CD8-positive, alpha-beta memory T cell (primary cell): ENCODE measurements at regions of chr17 and their contacts with region 1.

Region 1: DNA sequence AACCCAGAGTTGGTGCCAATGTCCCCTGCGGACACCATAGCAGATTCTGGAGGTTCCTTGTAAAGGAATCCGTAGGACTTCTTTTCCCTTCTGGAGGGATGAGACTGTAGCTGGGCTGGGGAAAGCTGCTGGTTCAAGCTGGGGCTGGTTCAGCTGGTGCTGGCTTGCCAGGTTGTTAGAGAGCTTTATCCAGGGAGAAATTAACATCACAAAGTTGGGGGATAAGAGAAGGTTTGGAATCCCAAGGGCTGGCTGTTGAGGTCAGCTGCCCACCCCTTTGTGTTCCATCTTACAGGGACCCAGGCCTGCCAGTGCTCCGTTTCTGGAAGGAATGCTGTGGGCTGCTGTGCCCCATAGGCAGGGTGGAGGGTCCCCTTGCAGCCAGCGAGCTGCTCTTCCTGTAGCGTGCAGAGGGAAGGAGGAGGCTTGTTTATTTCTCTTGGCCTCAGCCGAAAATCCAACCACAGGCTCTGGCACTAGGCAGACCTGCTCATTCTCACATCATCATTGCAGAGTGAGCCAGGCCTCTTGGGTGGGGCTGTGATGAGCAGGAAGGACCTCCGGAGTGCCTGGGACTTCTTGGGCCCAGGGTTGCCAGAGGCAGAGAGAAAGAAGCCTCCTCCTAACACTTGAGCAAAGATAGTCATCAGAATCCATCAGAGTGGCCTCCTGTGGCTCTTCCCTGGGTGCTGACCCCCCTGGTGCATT is 251.1 kb downstream of the SEC14L1 start:
- DNase-seq: peak in 2 of 5 donors; percentile 26 to 63
- H3K4me3 ChIP-seq: no peak overlapping the region
- H3K4me3 Mint-ChIP-seq: peak overlapping the region; percentile 20 to 76 (median 62)
- H3K27ac ChIP-seq: peak overlapping the region; percentile 3
- H3K27ac Mint-ChIP-seq: peak overlapping the region; percentile 76 to 96 (median 84)
- H3K4me1 ChIP-seq: peaks cover 72% of the 10 kb centered on the region
- H3K4me1 Mint-ChIP-seq: peaks cover 74 to 89% (median 79%) of the 10 kb centered on the region in 3 donors
- H3K27me3 ChIP-seq: no peaks in the 10 kb centered on the region
- H3K27me3 Mint-ChIP-seq: no peaks in the 10 kb centered on the region

Region 2: DNA sequence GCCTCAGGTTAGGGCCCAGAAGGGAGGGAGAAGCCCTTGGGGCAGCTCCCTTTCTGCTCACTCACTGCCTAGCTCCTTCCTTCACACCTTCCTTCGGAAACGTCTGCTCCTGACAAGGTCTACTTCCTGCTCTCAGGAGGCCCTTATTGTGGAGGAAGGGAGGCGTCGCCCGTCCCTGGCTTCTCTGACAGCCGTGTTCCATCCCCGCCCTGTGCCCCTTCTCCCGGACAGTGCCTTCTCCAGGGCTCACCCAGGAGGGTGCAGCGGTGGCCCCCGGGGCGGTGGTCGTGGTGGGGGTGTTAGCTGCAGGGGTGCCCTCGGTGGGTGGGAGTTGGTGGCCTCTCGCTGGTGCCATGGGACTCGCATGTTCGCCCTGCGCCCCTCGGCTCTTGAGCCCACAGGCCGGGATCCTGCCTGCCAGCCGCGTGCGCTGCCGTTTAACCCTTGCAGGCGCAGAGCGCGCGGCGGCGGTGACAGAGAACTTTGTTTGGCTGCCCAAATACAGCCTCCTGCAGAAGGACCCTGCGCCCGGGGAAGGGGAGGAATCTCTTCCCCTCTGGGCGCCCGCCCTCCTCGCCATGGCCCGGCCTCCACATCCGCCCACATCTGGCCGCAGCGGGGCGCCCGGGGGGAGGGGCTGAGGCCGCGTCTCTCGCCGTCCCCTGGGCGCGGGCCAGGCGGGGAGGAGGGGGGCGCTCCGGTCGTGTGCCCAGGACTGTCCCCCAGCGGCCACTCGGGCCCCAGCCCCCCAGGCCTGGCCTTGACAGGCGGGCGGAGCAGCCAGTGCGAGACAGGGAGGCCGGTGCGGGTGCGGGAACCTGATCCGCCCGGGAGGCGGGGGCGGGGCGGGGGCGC is 19.2 kb before region 1 on chr17:
- CTCF ChIA-PET with region 1: interaction called, 43 read pairs
- POLR2A ChIA-PET with region 1: interaction called, 35 read pairs
- DNase-seq: peak; percentile 55 to 76 (median 65)
- H3K4me3 ChIP-seq: peak overlapping the region; percentile 77
- H3K4me3 Mint-ChIP-seq: peak overlapping the region; percentile 80 to 93 (median 82)
- H3K27ac ChIP-seq: peak overlapping the region; percentile 82
- H3K27ac Mint-ChIP-seq: peak overlapping the region; percentile 79 to 95 (median 88)
- H3K4me1 ChIP-seq: peaks cover 70% of the 10 kb centered on the region
- H3K4me1 Mint-ChIP-seq: peaks cover 56 to 71% (median 67%) of the 10 kb centered on the region in 3 donors
- H3K27me3 ChIP-seq: no peaks in the 10 kb centered on the region
- H3K27me3 Mint-ChIP-seq: no peaks in the 10 kb centered on the region

Region 3: DNA sequence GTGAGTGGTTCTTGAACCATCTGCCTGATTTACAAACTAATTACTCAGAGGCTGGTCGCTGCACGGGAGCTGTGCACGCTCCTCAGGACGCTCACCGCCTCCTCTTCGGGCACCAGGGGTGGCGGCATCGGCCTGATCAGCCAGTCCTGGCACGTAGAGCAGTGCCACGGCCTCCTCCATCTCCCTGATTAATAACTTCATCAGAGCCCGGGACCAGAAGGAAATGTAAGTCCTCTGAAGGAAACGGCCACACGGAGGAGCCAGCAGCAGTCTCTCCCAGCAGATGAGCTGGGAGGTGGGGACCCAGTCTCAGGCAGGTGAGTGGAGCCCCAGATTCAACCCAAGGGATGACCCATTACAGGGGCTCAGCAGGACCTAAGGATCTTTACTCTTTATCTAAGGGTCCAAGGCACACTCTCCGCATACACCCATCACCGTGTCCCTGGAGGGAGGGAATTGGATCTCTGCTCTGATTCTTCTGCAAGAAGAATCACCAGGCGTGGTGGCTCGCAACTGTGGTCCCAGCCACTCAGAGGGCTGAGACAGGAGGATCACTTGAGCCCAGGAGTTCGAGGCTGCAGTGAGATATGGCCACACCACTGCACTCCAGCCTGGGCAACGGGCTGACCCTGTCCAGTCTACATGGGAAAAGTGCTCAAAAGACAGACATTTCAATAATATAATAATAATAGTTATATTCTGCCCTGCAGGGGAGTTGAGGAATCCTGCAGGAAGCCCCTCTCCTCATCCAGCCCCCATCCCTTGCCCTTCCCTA is 115.5 kb after region 1 on chr17:
- CTCF ChIA-PET with region 1: no interaction called
- POLR2A ChIA-PET with region 1: no interaction called
- DNase-seq: peak in 1 of 5 donors; percentile 35
- H3K4me3 ChIP-seq: no peak overlapping the region
- H3K4me3 Mint-ChIP-seq: no peak overlapping the region
- H3K27ac ChIP-seq: no peak overlapping the region
- H3K27ac Mint-ChIP-seq: peak overlapping the region in 2 of 8 donors; percentile 31 to 35
- H3K4me1 ChIP-seq: no peaks in the 10 kb centered on the region
- H3K4me1 Mint-ChIP-seq: no peaks in the 10 kb centered on the region
- H3K27me3 ChIP-seq: no peaks in the 10 kb centered on the region
- H3K27me3 Mint-ChIP-seq: peaks cover 0 to 1% of the 10 kb centered on the region in 2 donors

Region 4: GRCh38 chr17:77542551-77543490 is 151.0 kb after region 1 on chr17:
- CTCF ChIA-PET with region 1: no interaction called
- POLR2A ChIA-PET with region 1: no interaction called
- DNase-seq: peak; percentile 14 to 70 (median 36)
- H3K4me3 ChIP-seq: no peak overlapping the region
- H3K4me3 Mint-ChIP-seq: no peak overlapping the region
- H3K27ac ChIP-seq: no peak overlapping the region
- H3K27ac Mint-ChIP-seq: no peak overlapping the region
- H3K4me1 ChIP-seq: peaks cover 4% of the 10 kb centered on the region
- H3K4me1 Mint-ChIP-seq: no peaks in the 10 kb centered on the region
- H3K27me3 ChIP-seq: no peaks in the 10 kb centered on the region
- H3K27me3 Mint-ChIP-seq: peaks cover 8 to 24% of the 10 kb centered on the region in 2 donors